PC-3 (cell line): ENCODE measurements at regions of chr2 and their contacts with region 1.

Region 1: GRCh38 chr2:71784734-71785473 is 331.5 kb downstream of the DYSF start:
- DNase-seq: peak; percentile 95
- ATAC-seq: peak; percentile 84
- H3K4me3 ChIP-seq: peak overlapping the region; percentile 18; the same call in 1 of the 2 replicates
- H3K27ac ChIP-seq: peak overlapping the region; percentile 79
- H3K4me1 ChIP-seq: peaks cover 44% of the 10 kb centered on the region
- H3K27me3 ChIP-seq: no peaks in the 10 kb centered on the region
- CTCF ChIP-seq: peak; percentile 45; the same call in 1 of the 2 replicates

Region 2: GRCh38 chr2:71688530-71688929 is 96.4 kb before region 1 on chr2:
- CTCF ChIA-PET with region 1: interaction called, 13 read pairs
- POLR2A ChIA-PET with region 1: no interaction called
- intact Hi-C with region 1: no loop called
- DNase-seq: no peak
- ATAC-seq: no peak
- H3K4me3 ChIP-seq: no peak overlapping the region
- H3K27ac ChIP-seq: no peak overlapping the region
- H3K4me1 ChIP-seq: no peaks in the 10 kb centered on the region
- H3K27me3 ChIP-seq: no peaks in the 10 kb centered on the region
- CTCF ChIP-seq: no peak

Region 3: DNA sequence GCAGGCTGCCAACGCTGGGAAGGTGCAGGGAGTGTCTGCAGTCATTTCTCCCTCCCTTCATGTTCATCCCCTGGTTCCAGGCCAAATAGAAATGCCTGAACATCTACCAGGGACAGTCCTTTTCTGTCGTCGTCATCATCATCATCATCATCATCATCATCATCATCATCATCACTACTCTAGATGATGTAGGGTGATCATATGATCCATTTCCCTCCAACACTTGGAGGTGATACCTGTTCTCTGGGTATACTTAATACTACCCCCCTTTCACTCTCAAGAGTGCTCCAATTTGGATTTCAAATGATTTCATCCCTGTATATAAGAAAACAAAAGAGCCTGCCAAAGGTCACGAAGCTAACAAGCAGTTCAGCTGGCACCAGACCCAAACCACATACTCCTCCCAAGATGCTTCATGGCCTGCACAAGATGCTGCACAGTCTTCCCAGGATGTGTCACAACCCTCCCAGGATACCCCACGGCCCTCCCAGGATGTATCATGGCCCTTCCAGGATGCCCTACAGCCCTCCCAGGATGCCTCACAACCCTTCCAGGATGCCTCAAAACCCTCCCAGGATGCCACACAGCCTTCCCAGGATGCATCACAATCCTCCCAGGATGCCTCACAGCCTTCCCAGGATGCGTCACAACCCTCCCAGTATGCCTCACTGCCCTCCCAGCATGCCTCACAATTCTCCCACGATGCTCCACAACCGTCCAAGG is 73.6 kb before region 1 on chr2:
- CTCF ChIA-PET with region 1: no interaction called
- POLR2A ChIA-PET with region 1: no interaction called
- intact Hi-C with region 1: no loop called
- DNase-seq: peak; percentile 11
- ATAC-seq: 0 out of 2 replicates have a peak, but pooled peaks have one; percentile 22
- H3K4me3 ChIP-seq: no peak overlapping the region
- H3K27ac ChIP-seq: no peak overlapping the region
- H3K4me1 ChIP-seq: peaks cover 5% of the 10 kb centered on the region
- H3K27me3 ChIP-seq: no peaks in the 10 kb centered on the region
- CTCF ChIP-seq: no peak

Region 4: GRCh38 chr2:71995067-71995665 is 210.3 kb after region 1 on chr2:
- CTCF ChIA-PET with region 1: no interaction called
- POLR2A ChIA-PET with region 1: no interaction called
- intact Hi-C with region 1: loop called (anchors 10 kb)
- DNase-seq: peak; percentile 59
- ATAC-seq: no peak; the same call in 1 of the 2 replicates
- H3K4me3 ChIP-seq: no peak overlapping the region
- H3K27ac ChIP-seq: no peak overlapping the region
- H3K4me1 ChIP-seq: no peaks in the 10 kb centered on the region
- H3K27me3 ChIP-seq: peaks cover 22% of the 10 kb centered on the region
- CTCF ChIP-seq: peak; percentile 84